ENCODE measurements at regions of chr19 and their contacts with region 1.

Region 1: GRCh38 chr19:1275260-1275975 is at the start of gene FAM174C:
- DNase-seq: peak; percentile 95
- ATAC-seq: peak; percentile 68
- H3K4me3 Mint-ChIP-seq: peak within 1 kb of the TSS; percentile 71
- H3K27ac Mint-ChIP-seq: peak within 1 kb of the TSS; percentile 95
- H3K4me1 Mint-ChIP-seq: peaks cover 34% of the 10 kb centered on the region
- H3K27me3 Mint-ChIP-seq: no peaks in the 10 kb centered on the region
- CTCF ChIP-seq: no peak
- total RNA-seq, gene FAM174C: 59.4 to 65.9 TPM (median 65.7 TPM) in 3 replicates

Region 2: GRCh38 chr19:1229837-1230584 is 45.4 kb before region 1 on chr19:
- CTCF ChIA-PET with region 1: no interaction called
- POLR2A ChIA-PET with region 1: no interaction called
- DNase-seq: no peak
- ATAC-seq: no peak
- H3K4me3 Mint-ChIP-seq: no peak overlapping the region
- H3K27ac Mint-ChIP-seq: no peak overlapping the region
- H3K4me1 Mint-ChIP-seq: no peaks in the 10 kb centered on the region
- H3K27me3 Mint-ChIP-seq: no peaks in the 10 kb centered on the region
- CTCF ChIP-seq: no peak

Region 3: DNA sequence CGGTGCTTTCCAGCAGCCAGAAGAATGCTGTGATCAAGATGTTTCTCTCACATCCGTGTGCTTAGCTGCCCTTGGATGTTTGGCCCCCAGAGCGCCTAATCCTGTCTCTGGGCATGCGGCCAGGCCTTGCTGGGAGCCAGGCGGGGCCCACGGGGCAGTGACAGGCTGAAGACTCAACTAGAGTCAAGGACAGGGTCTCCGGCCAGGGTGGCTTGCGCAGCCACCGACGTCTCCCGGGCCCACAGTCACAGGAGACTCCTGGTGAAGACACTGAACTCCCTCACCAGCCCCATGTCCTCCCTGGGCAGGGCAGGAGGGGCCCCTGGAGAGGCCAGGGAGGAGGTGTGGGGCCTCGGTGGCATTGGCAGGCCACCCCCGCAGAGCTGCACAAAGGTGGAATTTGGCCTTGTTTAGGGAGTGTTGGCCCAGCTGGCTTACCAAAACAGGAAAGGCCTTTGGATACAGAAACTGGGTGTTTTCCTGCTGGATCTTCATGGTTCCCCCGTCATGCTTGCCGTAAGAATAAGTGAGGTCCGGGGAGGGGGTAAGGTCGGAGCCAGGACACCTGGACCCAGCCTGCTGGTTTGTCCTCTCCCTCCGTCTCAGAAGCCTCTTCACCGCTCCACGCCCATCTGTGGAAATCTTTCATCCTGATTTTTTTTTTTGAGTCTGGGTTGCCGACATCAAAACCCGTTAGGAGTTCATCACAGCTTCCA is 98.3 kb after region 1 on chr19:
- CTCF ChIA-PET with region 1: interaction called, 10 read pairs
- POLR2A ChIA-PET with region 1: no interaction called
- DNase-seq: no peak
- ATAC-seq: no peak
- H3K4me3 Mint-ChIP-seq: no peak overlapping the region
- H3K27ac Mint-ChIP-seq: peak overlapping the region; percentile 32; the same call in 1 of the 2 replicates
- H3K4me1 Mint-ChIP-seq: no peaks in the 10 kb centered on the region
- H3K27me3 Mint-ChIP-seq: no peaks in the 10 kb centered on the region
- CTCF ChIP-seq: no peak

Region 4: GRCh38 chr19:1379961-1380489 is 104.6 kb after region 1 on chr19:
- CTCF ChIA-PET with region 1: interaction called, 10 read pairs
- POLR2A ChIA-PET with region 1: interaction called, 3 read pairs
- DNase-seq: no peak
- ATAC-seq: no peak
- H3K4me3 Mint-ChIP-seq: no peak overlapping the region
- H3K27ac Mint-ChIP-seq: no peak overlapping the region
- H3K4me1 Mint-ChIP-seq: peaks cover 14% of the 10 kb centered on the region
- H3K27me3 Mint-ChIP-seq: peaks cover 4% of the 10 kb centered on the region
- CTCF ChIP-seq: no peak

Measured in WTC11 (cell line).